ENCODE measurements at regions of chr16 and their contacts with region 1.

Region 1: DNA sequence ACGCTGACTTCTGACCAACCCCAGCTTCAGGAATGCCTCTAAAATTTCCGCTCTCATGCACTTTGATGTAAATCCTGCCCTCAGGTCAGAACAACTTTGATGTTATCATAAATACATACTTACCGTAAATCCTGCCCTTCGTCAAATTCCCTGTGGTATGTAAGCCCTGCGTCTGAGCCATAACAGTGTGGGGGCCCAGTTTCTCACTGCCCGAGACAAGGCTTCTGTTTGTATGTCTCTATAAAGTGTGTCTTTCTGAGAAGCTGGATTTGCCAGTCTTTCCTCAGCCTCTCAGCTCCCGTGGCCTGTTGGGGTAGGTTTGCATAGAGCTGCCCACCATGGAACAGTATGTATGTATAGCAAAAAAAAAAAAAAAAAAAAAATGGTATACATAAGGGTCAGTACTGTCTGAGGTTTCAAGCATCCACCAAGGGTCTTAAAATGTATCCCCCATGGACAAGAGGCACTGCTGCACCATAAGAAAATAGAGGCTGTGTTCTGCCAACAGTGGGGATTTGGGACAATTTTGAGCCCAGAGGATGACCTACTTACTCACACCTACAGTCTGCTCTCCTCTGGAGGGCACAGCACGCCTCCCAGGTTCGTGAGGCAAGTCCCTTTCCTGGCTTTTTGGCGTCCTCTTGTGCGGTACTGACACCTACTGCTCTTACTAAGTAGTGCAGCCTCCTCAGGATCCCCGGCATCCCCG is 17.5 kb downstream of the PRMT7 start:
- DNase-seq: peak; percentile 69 to 90
- H3K4me3 ChIP-seq: no peak overlapping the region
- H3K27ac ChIP-seq: no peak overlapping the region
- H3K4me1 ChIP-seq: peaks cover 0 to 4% (median 1%) of the 10 kb centered on the region in 4 experiments; a peak in 2 of 7 replicates
- H3K27me3 ChIP-seq: no peaks in the 10 kb centered on the region
- CTCF ChIP-seq: peak; percentile 86 to 96 (median 94)
- EP300 ChIP-seq: no peak
- POLR2A ChIP-seq: no peak
- RAD21 ChIP-seq: peak; percentile 95

Region 2: GRCh38 chr16:68214726-68215125 is 113.6 kb before region 1 on chr16:
- CTCF ChIA-PET with region 1: no interaction called
- POLR2A ChIA-PET with region 1: no interaction called
- DNase-seq: no peak
- H3K4me3 ChIP-seq: no peak overlapping the region
- H3K27ac ChIP-seq: no peak overlapping the region
- H3K4me1 ChIP-seq: no peaks in the 10 kb centered on the region
- H3K27me3 ChIP-seq: no peaks in the 10 kb centered on the region
- CTCF ChIP-seq: no peak
- EP300 ChIP-seq: no peak
- POLR2A ChIP-seq: no peak
- RAD21 ChIP-seq: no peak

Region 3: DNA sequence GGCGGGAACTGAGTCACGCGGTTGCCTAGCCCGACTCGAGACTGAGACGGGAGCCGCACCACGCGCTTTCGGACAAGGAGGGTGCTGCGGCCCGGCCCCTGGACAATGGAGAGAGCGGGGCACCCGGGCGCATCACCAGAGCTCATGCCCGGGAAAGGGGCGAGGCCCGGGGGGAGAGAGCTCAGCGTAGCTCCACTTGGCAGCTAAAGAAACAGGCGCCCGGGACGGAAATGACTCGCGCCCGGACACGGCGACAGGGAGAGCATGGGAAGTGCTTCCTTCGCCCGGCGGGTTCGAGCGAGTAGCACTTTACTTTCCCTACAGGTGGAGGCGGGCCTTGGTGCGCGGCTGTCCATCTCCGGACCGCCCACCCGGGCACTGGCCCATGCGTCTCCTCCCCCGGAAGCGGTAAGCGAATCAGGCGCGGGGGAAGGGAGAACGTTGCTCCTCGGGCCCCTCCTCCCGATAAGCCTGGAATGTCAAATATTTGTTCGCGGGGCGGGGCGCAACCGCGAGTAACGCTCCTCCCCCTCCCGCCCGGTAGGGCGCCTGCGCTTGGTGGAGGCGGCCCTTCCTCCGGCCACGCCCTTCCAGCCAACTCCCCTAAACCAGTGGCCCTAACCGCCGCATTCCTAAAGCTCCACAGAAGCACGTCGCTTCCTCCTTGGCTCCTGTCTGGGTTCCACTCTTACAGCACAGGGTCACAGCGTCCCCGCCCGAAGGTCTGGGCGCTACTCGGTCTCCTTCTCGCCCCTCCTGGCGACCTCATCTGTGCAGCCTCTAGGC is 90.9 kb before region 1 on chr16:
- CTCF ChIA-PET with region 1: interaction called, 15 read pairs
- POLR2A ChIA-PET with region 1: interaction called, 4 read pairs
- DNase-seq: peak; percentile 97 to 99
- H3K4me3 ChIP-seq: peak overlapping the region; percentile 59 to 85 (median 82)
- H3K27ac ChIP-seq: peak overlapping the region; percentile 84
- H3K4me1 ChIP-seq: peaks cover 0 to 28% (median 20%) of the 10 kb centered on the region in 4 experiments; a peak in 5 of 7 replicates
- H3K27me3 ChIP-seq: no peaks in the 10 kb centered on the region
- CTCF ChIP-seq: no peak
- EP300 ChIP-seq: peak in 1 of 2 experiments; percentile 24; a peak in 1 of 3 replicates
- POLR2A ChIP-seq: peak; percentile 71 to 97
- RAD21 ChIP-seq: no peak

Region 4: GRCh38 chr16:68244903-68245853 is 83.1 kb before region 1 on chr16 and contains the start of gene PLA2G15:
- CTCF ChIA-PET with region 1: interaction called, 15 read pairs
- POLR2A ChIA-PET with region 1: no interaction called
- DNase-seq: peak; percentile 70 to 98
- H3K4me3 ChIP-seq: peak within 1 kb of the TSS; percentile 86 to 94 (median 90)
- H3K27ac ChIP-seq: no peak within 1 kb of the TSS
- H3K4me1 ChIP-seq: peaks cover 0 to 5% (median 3%) of the 10 kb centered on the region in 4 experiments; a peak in 5 of 7 replicates
- H3K27me3 ChIP-seq: peaks cover 0 to 8% (median 5%) of the 10 kb centered on the region in 4 experiments; a peak in 5 of 7 replicates
- CTCF ChIP-seq: no peak
- EP300 ChIP-seq: no peak
- POLR2A ChIP-seq: peak in 1 of 2 experiments; percentile 34; a peak in 1 of 3 replicates
- RAD21 ChIP-seq: no peak
- total RNA-seq, gene PLA2G15: 10.0 and 11.2 TPM in 2 replicates

Region 5: DNA sequence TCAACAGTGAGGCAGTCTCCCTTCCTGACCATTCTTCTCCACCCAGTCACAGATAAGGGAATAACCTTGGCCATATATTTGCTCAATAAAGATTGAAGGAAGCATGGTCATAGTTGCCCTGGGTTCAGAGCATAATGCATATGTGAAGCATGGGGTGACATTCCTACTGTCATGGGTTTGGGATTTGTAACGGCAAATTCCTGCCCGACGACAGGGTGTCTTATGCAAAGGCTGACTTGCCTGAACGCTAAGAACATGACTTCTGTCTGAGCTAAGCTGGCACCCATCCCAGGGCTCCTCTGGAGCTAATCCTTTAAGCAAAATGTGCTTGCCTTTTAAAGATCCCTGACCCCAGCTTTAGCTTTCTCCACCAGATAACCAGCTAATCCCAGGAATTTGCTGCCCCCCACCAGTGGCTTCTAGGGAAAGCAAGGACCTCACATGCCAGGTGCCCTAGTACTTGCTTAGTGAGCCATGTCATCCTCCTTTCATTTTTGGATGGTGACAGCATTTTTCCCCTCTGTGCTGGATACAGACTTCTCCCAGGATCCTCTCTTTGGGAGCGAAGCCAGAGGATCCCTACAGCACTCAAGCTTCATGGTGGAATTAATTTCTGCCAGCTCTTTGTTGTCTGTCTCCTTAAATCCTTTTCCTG is 29.3 kb before region 1 on chr16:
- CTCF ChIA-PET with region 1: interaction called, 11 read pairs
- POLR2A ChIA-PET with region 1: interaction called, 3 read pairs
- DNase-seq: no peak
- H3K4me3 ChIP-seq: no peak overlapping the region
- H3K27ac ChIP-seq: no peak overlapping the region
- H3K4me1 ChIP-seq: no peaks in the 10 kb centered on the region
- H3K27me3 ChIP-seq: no peaks in the 10 kb centered on the region
- CTCF ChIP-seq: no peak
- EP300 ChIP-seq: no peak
- POLR2A ChIP-seq: no peak
- RAD21 ChIP-seq: no peak

Region 6: GRCh38 chr16:68344252-68344651 is 15.9 kb after region 1 on chr16:
- CTCF ChIA-PET with region 1: interaction called, 10 read pairs
- POLR2A ChIA-PET with region 1: interaction called, 4 read pairs
- DNase-seq: no peak
- H3K4me3 ChIP-seq: no peak overlapping the region
- H3K27ac ChIP-seq: no peak overlapping the region
- H3K4me1 ChIP-seq: no peaks in the 10 kb centered on the region
- H3K27me3 ChIP-seq: no peaks in the 10 kb centered on the region; a peak in 1 of 7 replicates
- CTCF ChIP-seq: no peak
- EP300 ChIP-seq: no peak
- POLR2A ChIP-seq: no peak
- RAD21 ChIP-seq: no peak

Region 7: GRCh38 chr16:68356249-68356918 is 28.1 kb after region 1 on chr16:
- CTCF ChIA-PET with region 1: interaction called, 14 read pairs
- POLR2A ChIA-PET with region 1: interaction called, 3 read pairs
- DNase-seq: no peak
- H3K4me3 ChIP-seq: no peak overlapping the region
- H3K27ac ChIP-seq: no peak overlapping the region
- H3K4me1 ChIP-seq: no peaks in the 10 kb centered on the region
- H3K27me3 ChIP-seq: no peaks in the 10 kb centered on the region
- CTCF ChIP-seq: no peak
- EP300 ChIP-seq: no peak
- POLR2A ChIP-seq: no peak
- RAD21 ChIP-seq: no peak